ENCODE measurements at regions of chr2 and their contacts with region 1.

Region 1: DNA sequence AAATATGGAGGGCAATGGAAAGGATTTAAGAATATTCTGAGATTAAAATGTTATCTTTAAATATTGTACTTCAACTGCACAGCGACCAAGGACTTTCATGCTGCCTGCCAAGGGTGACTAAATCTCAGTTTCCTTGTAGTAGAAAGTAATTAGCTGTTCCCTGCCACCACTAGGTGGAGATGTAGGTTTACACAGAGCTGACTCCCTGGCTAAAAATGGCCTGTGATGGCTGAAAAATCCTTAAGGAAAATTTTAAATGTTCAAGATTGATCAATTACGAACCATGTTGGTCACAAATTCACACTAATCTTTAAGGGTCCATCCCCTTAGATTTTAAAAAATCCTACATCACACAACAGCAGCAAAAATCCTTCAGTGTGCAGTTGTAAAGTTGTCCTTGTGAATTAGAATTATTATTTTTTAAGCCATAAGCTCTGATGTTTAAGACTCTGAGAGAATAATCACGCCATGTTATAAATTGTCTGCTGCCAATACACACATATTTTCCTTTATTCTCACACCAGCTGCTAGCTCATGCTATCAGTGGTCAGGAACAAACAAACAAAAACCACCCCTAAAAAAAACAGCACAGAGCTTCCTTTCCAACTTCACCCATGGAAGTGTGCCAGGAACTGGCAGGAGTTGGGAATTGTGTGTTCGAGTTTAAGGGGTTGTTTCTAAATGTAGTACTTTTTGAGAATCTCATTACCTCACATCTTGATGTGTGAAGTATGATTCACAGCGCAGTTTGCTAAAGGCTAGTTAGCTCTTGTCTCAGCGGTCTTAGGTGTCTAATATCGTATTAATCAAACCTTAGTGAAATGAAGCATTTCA is 399.8 kb downstream of the TMEM182 start:
- DNase-seq: peak; percentile 12
- ATAC-seq: peak; percentile 81; the same call in 1 of the 2 replicates
- H3K4me3 ChIP-seq: no peak overlapping the region
- H3K27ac ChIP-seq: no peak overlapping the region
- H3K4me1 ChIP-seq: no peaks in the 10 kb centered on the region
- H3K27me3 ChIP-seq: 0 out of 2 replicates have a peak, but pooled peaks cover 2% of the 10 kb centered on the region
- CTCF ChIP-seq: peak; percentile 86

Region 2: GRCh38 chr2:103208916-103209315 is 47.2 kb after region 1 on chr2:
- CTCF ChIA-PET with region 1: no interaction called
- POLR2A ChIA-PET with region 1: no interaction called
- in situ Hi-C with region 1: no loop called
- intact Hi-C with region 1: no loop called
- DNase-seq: no peak
- ATAC-seq: no peak
- H3K4me3 ChIP-seq: no peak overlapping the region
- H3K27ac ChIP-seq: no peak overlapping the region
- H3K4me1 ChIP-seq: no peaks in the 10 kb centered on the region
- H3K27me3 ChIP-seq: no peaks in the 10 kb centered on the region
- CTCF ChIP-seq: no peak

Region 3: DNA sequence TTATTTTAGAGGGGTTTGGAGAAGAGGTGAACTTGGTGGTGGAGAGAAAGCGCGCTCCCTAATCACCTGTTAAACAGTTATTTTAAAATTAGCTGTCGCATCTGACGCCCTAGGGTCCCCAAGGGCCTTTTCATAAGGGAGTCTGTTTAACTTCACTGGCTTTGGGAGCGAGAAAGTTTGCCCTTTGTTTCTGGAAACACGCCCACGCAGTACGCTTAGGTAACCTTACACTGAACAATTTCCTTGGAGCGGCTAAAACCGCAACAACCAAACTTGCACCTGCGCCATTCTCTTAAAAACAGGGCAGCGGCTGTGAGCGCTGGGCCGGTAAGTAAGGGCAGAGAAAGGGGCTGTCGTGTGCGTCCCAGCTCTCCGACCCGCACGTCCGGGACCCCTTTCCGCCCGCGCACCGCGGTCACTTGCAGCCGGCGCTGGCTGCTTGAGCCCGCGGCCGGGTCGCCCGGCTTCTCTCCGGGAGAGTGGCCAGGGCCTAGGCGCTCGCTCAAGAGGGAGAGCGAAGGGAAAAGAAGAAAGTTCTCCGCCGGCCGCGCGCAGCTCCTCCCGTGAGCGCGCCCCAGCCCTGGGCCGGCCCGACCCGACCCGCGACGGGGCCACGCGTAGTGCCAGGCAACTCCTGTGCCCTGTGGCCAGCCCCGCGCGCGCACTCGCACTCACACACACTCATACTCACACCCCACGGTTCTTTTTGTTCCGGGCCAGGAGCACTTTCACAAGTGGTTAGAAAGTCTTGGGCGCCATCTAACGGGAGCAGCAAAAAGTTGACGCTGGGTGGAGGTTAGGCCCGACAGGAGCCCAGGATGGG is 1711.4 kb after region 1 on chr2:
- CTCF ChIA-PET with region 1: no interaction called
- POLR2A ChIA-PET with region 1: no interaction called
- in situ Hi-C with region 1: no loop called
- intact Hi-C with region 1: loop called (anchors 10 kb)
- DNase-seq: no peak
- ATAC-seq: peak; percentile 92
- H3K4me3 ChIP-seq: peak overlapping the region; percentile 55 to 57
- H3K27ac ChIP-seq: no peak overlapping the region
- H3K4me1 ChIP-seq: peaks cover 4% of the 10 kb centered on the region
- H3K27me3 ChIP-seq: peaks cover 29% of the 10 kb centered on the region
- CTCF ChIP-seq: peak; percentile 88